ENCODE measurements at regions of chr9 and their contacts with region 1.

Region 1: DNA sequence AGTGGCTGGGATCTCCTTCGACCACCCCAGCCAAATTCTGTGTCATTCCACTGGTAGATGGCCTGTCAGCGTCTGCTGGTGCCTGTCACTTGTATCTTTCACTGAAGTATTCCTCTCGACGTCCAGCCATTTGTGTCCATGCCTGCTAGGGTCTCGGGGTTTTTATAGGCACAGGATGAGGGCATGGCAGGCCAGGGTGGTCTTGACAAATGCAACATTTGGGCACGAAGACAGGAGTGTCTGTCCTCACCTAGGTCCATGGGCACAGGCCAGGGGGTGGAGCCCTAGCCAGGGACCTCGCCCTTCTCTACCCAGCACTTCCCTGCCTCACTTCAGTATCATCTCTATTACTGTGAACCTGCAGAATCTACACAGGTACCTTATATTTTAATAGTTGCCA is 2223.9 kb upstream of the ACO1 start:
- DNase-seq: no peak
- ATAC-seq: no peak
- H3K4me3 ChIP-seq: no peak overlapping the region
- H3K27ac ChIP-seq: no peak overlapping the region
- H3K4me1 ChIP-seq: no peaks in the 10 kb centered on the region
- H3K27me3 ChIP-seq: no peaks in the 10 kb centered on the region
- CTCF ChIP-seq: no peak
- EP300 ChIP-seq: no peak
- POLR2A ChIP-seq: no peak
- RAD21 ChIP-seq: no peak

Region 2: DNA sequence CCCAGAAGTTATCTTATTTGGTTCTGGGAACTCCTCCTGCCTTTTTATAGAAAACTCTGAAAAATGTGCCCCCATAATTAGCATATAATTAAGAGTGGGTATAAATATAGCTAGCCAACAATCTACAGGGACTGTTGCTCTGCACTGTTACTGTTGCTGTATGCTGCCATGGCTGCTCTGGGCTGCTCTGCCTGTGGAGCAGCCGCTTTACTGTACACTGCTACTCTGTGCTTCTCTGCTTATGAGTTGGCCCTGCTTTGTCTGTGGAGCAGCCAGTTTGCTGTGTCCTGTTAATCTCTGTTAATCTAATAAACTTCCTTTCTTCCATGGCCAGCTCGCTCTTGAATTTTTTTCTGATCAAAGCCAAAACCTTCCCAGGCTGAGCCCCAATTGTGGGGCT is 20.2 kb before region 1 on chr9:
- CTCF ChIA-PET with region 1: no interaction called
- POLR2A ChIA-PET with region 1: no interaction called
- in situ Hi-C with region 1: no loop called
- intact Hi-C with region 1: no loop called
- DNase-seq: no peak
- ATAC-seq: no peak
- H3K4me3 ChIP-seq: no peak overlapping the region
- H3K27ac ChIP-seq: no peak overlapping the region
- H3K4me1 ChIP-seq: no peaks in the 10 kb centered on the region
- H3K27me3 ChIP-seq: no peaks in the 10 kb centered on the region
- CTCF ChIP-seq: no peak
- EP300 ChIP-seq: no peak
- POLR2A ChIP-seq: no peak
- RAD21 ChIP-seq: no peak

Region 3: GRCh38 chr9:30197954-30198353 is 37.4 kb after region 1 on chr9:
- CTCF ChIA-PET with region 1: no interaction called
- POLR2A ChIA-PET with region 1: no interaction called
- in situ Hi-C with region 1: no loop called
- intact Hi-C with region 1: loop called (anchors 1 kb)
- DNase-seq: peak; percentile 57
- ATAC-seq: peak; percentile 64
- H3K4me3 ChIP-seq: peak overlapping the region in 1 of 3 experiments; percentile 20; a peak in 1 of 6 replicates
- H3K27ac ChIP-seq: no peak overlapping the region
- H3K4me1 ChIP-seq: no peaks in the 10 kb centered on the region
- H3K27me3 ChIP-seq: no peaks in the 10 kb centered on the region
- CTCF ChIP-seq: no peak
- EP300 ChIP-seq: peak in 1 of 2 experiments; percentile 18; a peak in 1 of 4 replicates
- POLR2A ChIP-seq: no peak
- RAD21 ChIP-seq: no peak

Region 4: GRCh38 chr9:31314241-31314640 is 1153.7 kb after region 1 on chr9:
- CTCF ChIA-PET with region 1: no interaction called
- POLR2A ChIA-PET with region 1: no interaction called
- in situ Hi-C with region 1: no loop called
- intact Hi-C with region 1: no loop called
- DNase-seq: no peak
- ATAC-seq: no peak
- H3K4me3 ChIP-seq: no peak overlapping the region
- H3K27ac ChIP-seq: no peak overlapping the region
- H3K4me1 ChIP-seq: no peaks in the 10 kb centered on the region
- H3K27me3 ChIP-seq: no peaks in the 10 kb centered on the region
- CTCF ChIP-seq: no peak
- EP300 ChIP-seq: no peak
- POLR2A ChIP-seq: no peak
- RAD21 ChIP-seq: no peak